Thyroid gland (tissue), 4 donors: ENCODE measurements at regions of chr17 and their contacts with region 1.

Region 1: DNA sequence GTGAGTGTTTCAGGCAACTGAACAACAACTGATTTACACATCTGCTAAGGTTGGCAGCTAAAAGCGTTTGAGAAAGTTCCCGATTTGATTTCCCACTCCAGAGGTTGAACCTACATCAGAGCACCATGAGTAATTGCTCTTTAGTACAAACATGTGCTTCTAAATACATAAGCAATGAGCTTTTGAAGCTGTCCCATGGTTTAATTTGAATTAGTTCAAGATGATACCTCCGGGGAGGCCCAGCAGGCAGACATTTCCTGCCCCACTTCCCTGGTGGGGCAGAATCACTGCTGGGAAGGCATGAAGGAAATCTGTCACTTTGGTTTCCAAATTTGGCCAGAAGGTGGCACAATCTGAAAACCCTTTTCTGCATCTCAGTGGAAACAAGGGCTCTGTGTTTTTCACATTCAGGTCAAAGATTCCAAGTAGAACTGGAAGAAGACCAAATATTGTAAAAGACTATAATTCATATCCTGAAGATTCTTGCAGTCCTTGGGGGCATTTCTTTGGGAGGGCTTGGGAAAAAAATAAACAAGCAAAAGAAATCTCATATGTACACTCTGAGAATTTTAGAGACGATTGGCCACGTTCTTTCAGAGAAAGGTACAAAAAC is 176.2 kb upstream of the FAM20A start:
- DNase-seq: peak; percentile 40 to 42
- H3K4me3 ChIP-seq: no peak overlapping the region
- H3K27ac ChIP-seq: no peak overlapping the region
- H3K4me1 ChIP-seq: peaks cover 0 to 17% of the 10 kb centered on the region in 2 donors
- H3K27me3 ChIP-seq: no peaks in the 10 kb centered on the region
- CTCF ChIP-seq: peak; percentile 37 to 77 (median 69)
- POLR2A ChIP-seq: no peak

Region 2: DNA sequence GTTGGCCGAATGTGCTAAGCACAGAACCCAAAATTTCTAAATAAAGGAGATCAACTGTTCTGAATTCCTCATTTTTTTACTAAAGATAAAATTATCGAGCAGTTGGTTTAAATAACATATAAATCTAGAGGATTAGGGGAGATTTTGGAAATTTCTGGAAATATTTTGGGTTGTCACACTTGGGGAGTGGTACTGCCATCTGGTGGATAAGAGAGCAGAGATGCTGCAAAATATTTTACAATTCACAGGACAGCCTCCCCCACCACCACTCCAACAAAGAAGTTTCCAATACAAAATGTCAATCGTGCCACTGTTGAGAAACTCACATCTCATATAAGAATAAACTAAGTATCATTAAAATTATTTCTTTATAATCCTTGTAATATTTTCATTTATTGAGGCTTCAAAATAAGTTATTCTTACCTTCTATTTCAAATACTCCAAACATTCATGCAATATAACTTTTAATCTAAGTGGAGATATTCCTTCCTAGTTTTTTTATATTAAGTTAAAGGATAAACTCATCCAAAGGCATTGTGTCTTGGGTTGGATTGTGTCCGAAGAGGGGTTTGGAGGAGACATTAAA is 194.9 kb after region 1 on chr17:
- intact Hi-C with region 1: loop called (anchors 5 kb)
- DNase-seq: no peak
- H3K4me3 ChIP-seq: no peak overlapping the region
- H3K27ac ChIP-seq: no peak overlapping the region
- H3K4me1 ChIP-seq: no peaks in the 10 kb centered on the region
- H3K27me3 ChIP-seq: no peaks in the 10 kb centered on the region
- CTCF ChIP-seq: peak; percentile 18 to 55 (median 42)
- POLR2A ChIP-seq: no peak

Region 3: GRCh38 chr17:69235338-69235930 is 458.1 kb after region 1 on chr17:
- intact Hi-C with region 1: loop called (anchors 5 kb)
- DNase-seq: peak; percentile 72 to 80
- H3K4me3 ChIP-seq: no peak overlapping the region
- H3K27ac ChIP-seq: no peak overlapping the region
- H3K4me1 ChIP-seq: no peaks in the 10 kb centered on the region
- H3K27me3 ChIP-seq: no peaks in the 10 kb centered on the region
- CTCF ChIP-seq: peak; percentile 54 to 81 (median 66)
- POLR2A ChIP-seq: no peak